Caco-2 (cell line): ENCODE measurements at regions of chr21 and their contacts with region 1.

Region 1: DNA sequence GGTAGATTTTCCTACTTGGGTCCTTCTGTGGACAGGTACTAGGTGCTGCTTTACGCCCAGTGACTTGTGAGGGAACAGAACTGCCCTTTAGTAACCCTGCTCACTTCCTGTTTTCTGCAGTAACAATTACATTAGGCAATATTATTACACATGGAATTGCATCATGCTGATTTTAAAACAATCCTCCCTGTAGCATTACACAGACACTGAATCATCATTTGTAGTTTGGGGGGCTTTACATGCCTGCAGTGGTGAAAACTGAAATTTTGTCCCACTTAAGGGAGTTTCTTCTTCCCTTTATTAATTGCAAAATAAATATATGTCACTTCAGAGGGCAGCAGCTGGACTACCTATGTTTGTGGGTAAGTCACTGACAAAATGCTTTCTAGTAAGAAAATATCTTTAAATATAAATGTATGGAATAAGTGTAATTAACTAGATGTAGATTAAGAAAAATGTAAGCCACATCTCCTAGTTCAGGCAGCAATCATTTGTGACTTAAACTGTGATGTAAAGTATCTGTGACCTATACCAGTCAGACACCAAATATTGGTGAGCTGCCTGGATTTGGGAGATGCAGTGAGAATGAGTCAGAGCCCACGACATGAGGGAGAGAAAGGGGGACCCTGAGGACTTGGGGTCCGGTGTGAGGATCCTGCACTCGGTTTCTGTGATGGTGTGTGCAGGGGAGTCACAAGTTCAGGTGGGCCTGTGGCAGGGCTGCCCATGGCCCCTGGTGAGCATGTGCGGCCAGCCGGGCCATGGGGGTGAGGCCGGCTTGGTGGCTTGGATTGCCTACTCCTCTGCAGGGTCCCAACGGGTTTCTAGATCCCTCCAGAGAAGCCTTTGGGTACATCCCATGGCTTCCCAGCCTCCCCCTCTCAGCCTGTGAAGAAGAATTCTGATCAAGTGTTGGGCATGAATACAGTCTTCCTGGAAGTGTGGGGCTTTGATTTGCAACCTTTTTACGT is 19.2 kb upstream of the ABCG1 start:
- DNase-seq: no peak
- H3K4me3 ChIP-seq: no peak overlapping the region
- H3K4me3 Mint-ChIP-seq: no peak overlapping the region
- H3K27ac Mint-ChIP-seq: no peak overlapping the region
- H3K4me1 ChIP-seq: no peaks in the 10 kb centered on the region
- H3K4me1 Mint-ChIP-seq: no peaks in the 10 kb centered on the region
- H3K27me3 ChIP-seq: no peaks in the 10 kb centered on the region; the same call in 1 of the 2 replicates
- H3K27me3 Mint-ChIP-seq: peaks cover 8% of the 10 kb centered on the region
- CTCF ChIP-seq: no peak

Region 2: GRCh38 chr21:42251654-42252324 is 52.0 kb after region 1 on chr21:
- CTCF ChIA-PET with region 1: no interaction called
- POLR2A ChIA-PET with region 1: no interaction called
- intact Hi-C with region 1: loop called (anchors 2 kb)
- DNase-seq: no peak
- H3K4me3 ChIP-seq: no peak overlapping the region
- H3K4me3 Mint-ChIP-seq: no peak overlapping the region
- H3K27ac Mint-ChIP-seq: no peak overlapping the region
- H3K4me1 ChIP-seq: no peaks in the 10 kb centered on the region
- H3K4me1 Mint-ChIP-seq: no peaks in the 10 kb centered on the region
- H3K27me3 ChIP-seq: no peaks in the 10 kb centered on the region
- H3K27me3 Mint-ChIP-seq: peaks cover 24% of the 10 kb centered on the region
- CTCF ChIP-seq: no peak

Region 3: DNA sequence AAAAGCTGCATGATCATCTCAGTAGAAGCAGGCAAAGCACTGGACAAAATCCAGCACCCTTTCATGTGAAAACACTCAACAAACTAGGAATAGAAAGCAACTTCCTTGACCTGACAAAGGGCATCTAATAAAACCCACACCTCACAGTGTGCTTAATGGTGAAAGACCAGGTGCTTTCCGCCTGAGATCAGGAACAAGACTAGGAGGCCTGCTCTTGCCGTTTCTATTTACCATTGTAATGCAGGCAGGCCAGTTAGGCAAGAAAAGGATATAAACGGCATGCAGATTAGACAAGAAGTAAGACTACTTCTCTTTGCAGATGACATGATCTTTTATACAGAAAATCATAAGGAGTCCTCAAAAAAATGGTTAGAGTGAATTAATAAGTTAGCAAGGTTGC is 351.0 kb after region 1 on chr21:
- CTCF ChIA-PET with region 1: no interaction called
- POLR2A ChIA-PET with region 1: no interaction called
- intact Hi-C with region 1: no loop called
- DNase-seq: peak; percentile 22 to 24
- H3K4me3 ChIP-seq: no peak overlapping the region
- H3K4me3 Mint-ChIP-seq: no peak overlapping the region
- H3K27ac Mint-ChIP-seq: no peak overlapping the region
- H3K4me1 ChIP-seq: peaks cover 7% of the 10 kb centered on the region; the same call in 1 of the 2 replicates
- H3K4me1 Mint-ChIP-seq: peaks cover 7% of the 10 kb centered on the region
- H3K27me3 ChIP-seq: no peaks in the 10 kb centered on the region
- H3K27me3 Mint-ChIP-seq: no peaks in the 10 kb centered on the region
- CTCF ChIP-seq: no peak